ENCODE measurements at regions of chr1 and their contacts with region 1.

Region 1: DNA sequence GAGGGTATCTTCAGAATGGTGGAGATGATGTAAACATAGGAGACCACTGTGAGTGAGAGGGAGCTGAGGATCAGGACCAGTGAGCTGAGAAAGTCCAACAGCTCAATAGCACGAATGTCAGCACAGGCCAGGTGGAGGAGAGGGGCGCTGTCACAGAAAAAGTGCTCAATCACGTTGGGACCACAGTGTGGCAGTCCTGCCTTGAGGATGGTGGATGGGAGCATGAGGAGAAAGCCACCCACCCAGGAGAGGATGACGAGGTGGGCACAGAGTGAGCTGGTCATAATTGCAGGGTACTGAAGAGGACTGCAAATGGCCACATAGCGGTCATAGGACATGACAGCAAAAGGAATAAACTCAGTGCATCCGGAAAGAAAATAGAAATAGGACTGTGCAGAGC is 8.1 kb downstream of the OR11L1 start:
- DNase-seq: no peak
- ATAC-seq: no peak; the same call in 1 of the 2 replicates
- H3K4me3 ChIP-seq: no peak overlapping the region
- H3K27ac ChIP-seq: no peak overlapping the region
- H3K4me1 ChIP-seq: no peaks in the 10 kb centered on the region
- H3K27me3 ChIP-seq: no peaks in the 10 kb centered on the region
- CTCF ChIP-seq: peak; percentile 36

Region 2: DNA sequence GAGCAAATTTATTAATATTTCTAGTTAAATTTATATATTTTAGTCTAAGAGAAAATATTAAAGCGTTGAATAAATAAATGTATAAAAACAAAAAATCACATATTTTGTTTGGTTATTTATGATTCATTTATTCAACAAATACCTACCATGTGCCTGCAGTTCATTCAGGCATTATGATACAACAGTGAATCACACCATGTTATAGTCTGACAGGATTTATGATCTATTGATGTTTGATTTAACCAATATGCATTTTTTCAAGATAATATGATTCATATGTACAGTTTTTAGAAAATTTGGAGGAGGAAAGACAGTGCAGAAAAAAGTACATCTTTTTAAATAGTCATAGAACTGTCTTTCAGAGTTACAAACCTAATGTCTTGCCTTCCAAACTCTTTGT is 16.0 kb after region 1 on chr1:
- CTCF ChIA-PET with region 1: no interaction called
- POLR2A ChIA-PET with region 1: no interaction called
- intact Hi-C with region 1: loop called (anchors 2 kb)
- DNase-seq: peak; percentile 97
- ATAC-seq: peak; percentile 90
- H3K4me3 ChIP-seq: no peak overlapping the region
- H3K27ac ChIP-seq: 0 out of 2 replicates have a peak overlapping the region, but pooled peaks have one; percentile 3
- H3K4me1 ChIP-seq: peaks cover 19% of the 10 kb centered on the region
- H3K27me3 ChIP-seq: no peaks in the 10 kb centered on the region
- CTCF ChIP-seq: no peak

Region 3: GRCh38 chr1:247906504-247907047 is 73.0 kb after region 1 on chr1:
- CTCF ChIA-PET with region 1: no interaction called
- POLR2A ChIA-PET with region 1: interaction called, 15 read pairs
- intact Hi-C with region 1: no loop called
- DNase-seq: peak; percentile 100
- ATAC-seq: peak; percentile 98
- H3K4me3 ChIP-seq: peak overlapping the region; percentile 55
- H3K27ac ChIP-seq: peak overlapping the region; percentile 68
- H3K4me1 ChIP-seq: peaks cover 20% of the 10 kb centered on the region
- H3K27me3 ChIP-seq: no peaks in the 10 kb centered on the region
- CTCF ChIP-seq: no peak

Region 4: GRCh38 chr1:248045209-248045608 is 211.6 kb after region 1 on chr1:
- CTCF ChIA-PET with region 1: no interaction called
- POLR2A ChIA-PET with region 1: no interaction called
- intact Hi-C with region 1: no loop called
- DNase-seq: no peak
- ATAC-seq: no peak
- H3K4me3 ChIP-seq: no peak overlapping the region
- H3K27ac ChIP-seq: no peak overlapping the region
- H3K4me1 ChIP-seq: no peaks in the 10 kb centered on the region
- H3K27me3 ChIP-seq: no peaks in the 10 kb centered on the region
- CTCF ChIP-seq: no peak

Measured in PC-3 (cell line).